ENCODE measurements at regions of chr20 and their contacts with region 1.

Region 1: GRCh38 chr20:51703400-51704287 is 64.5 kb downstream of the ATP9A start:
- DNase-seq: no peak
- ATAC-seq: no peak

Region 2: DNA sequence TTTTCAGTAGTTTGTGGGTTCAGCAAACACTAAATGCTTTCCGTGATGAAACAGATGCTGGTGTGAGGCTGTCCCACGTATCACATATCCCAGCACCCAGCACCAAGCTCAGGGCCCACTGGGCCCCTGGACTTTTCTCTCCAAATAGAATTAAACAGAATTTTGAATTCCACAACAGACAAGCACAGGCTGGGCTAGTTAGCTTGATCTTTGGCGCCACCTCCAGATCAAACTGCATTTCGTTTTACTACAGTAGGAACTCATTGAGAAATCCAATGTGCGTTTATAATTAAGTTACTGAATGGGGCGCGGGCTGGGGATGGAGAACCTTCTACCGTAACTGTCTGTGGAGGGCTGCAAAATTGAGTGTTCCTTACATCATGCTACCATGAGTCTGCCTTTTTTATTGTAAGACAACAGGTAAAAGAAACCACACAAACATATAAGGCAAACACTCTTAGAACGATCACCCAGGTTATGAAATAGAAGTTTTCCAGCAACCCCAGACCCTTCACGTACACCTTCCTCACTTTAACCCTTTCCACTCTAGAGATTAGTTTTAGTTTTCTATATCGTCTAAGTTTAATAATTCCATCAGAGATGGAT is 380.1 kb after region 1 on chr20:
- intact Hi-C with region 1: loop called in 1 of 2 experiments (anchors 10 kb)
- DNase-seq: peak; percentile 41
- ATAC-seq: peak; percentile 56 to 68

Measured in left cardiac atrium (tissue), 4 donors.